ENCODE measurements at regions of chr3 and their contacts with region 1.

Region 1: GRCh38 chr3:129481766-129482332 is 41.8 kb downstream of the IFT122 start:
- DNase-seq: no peak
- H3K4me3 ChIP-seq: no peak overlapping the region
- H3K27ac ChIP-seq: peak overlapping the region in 51 of 59 donors; percentile 6 to 88 (median 66)
- H3K27me3 ChIP-seq: no peaks in the 10 kb centered on the region
- CTCF ChIP-seq: no peak

Region 2: GRCh38 chr3:129233538-129233937 is 248.3 kb before region 1 on chr3:
- intact Hi-C with region 1: no loop called
- DNase-seq: peak in 4 of 10 donors; percentile 34 to 47 (median 43)
- H3K4me3 ChIP-seq: no peak overlapping the region
- H3K27ac ChIP-seq: peak overlapping the region in 8 of 59 donors; percentile 1 to 53 (median 42)
- H3K27me3 ChIP-seq: no peaks in the 10 kb centered on the region
- CTCF ChIP-seq: no peak

Region 3: GRCh38 chr3:129439817-129440617 is 41.8 kb before region 1 on chr3 and contains the starts of genes IFT122 and MBD4:
- intact Hi-C with region 1: loop called in 1 of 2 experiments (anchors 5 kb)
- DNase-seq: peak; percentile 92 to 98 (median 95)
- H3K4me3 ChIP-seq: peak within 1 kb of the TSS; percentile 68 to 99 (median 92)
- H3K27ac ChIP-seq: peak within 1 kb of the TSS; percentile 30 to 94 (median 85)
- H3K27me3 ChIP-seq: no peaks in the 10 kb centered on the region
- CTCF ChIP-seq: peak in 23 of 56 donors; percentile 3 to 47 (median 25)
- total RNA-seq, gene IFT122: 38.5 to 96.5 (median 58.5) TPM
- total RNA-seq, gene MBD4: 23.7 to 45.4 (median 31.5) TPM

Region 4: DNA sequence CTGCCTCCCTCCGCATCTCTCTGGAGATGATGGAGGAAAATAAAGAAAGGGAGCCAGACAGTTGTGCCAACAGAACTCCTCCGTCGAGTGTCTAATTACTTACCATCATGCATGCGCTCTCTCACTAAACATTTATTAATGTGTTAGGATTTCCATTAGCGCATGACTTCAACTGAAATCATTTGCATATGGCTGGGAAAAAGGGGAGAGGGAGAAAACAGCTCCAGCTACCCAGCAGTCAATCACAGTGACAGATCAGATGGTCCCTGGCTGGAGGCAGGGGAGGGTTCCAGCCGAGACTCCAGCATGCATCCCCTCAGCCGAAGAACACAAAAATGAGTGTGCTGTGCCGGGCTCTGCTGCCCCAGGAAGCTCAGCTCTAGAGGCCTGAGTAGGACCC is 39.8 kb after region 1 on chr3:
- intact Hi-C with region 1: no loop called
- DNase-seq: no peak
- H3K4me3 ChIP-seq: no peak overlapping the region
- H3K27ac ChIP-seq: no peak overlapping the region
- H3K27me3 ChIP-seq: no peaks in the 10 kb centered on the region
- CTCF ChIP-seq: no peak

Region 5: GRCh38 chr3:129845956-129846355 is 364.1 kb after region 1 on chr3:
- intact Hi-C with region 1: no loop called
- DNase-seq: no peak
- H3K4me3 ChIP-seq: no peak overlapping the region
- H3K27ac ChIP-seq: no peak overlapping the region
- H3K27me3 ChIP-seq: no peaks in the 10 kb centered on the region
- CTCF ChIP-seq: no peak